T-cell (primary cell): ENCODE measurements at regions of chr10 and their contacts with region 1.

Region 1: GRCh38 chr10:75229971-75230370 is 5.8 kb downstream of the COMTD1 start:
- DNase-seq: no peak
- ATAC-seq: no peak
- H3K4me3 ChIP-seq: no peak overlapping the region
- H3K4me3 Mint-ChIP-seq: no peak overlapping the region
- H3K27ac ChIP-seq: peak overlapping the region; percentile 33
- H3K27ac Mint-ChIP-seq: peak overlapping the region; percentile 7 to 19
- H3K4me1 ChIP-seq: peaks cover 0 to 22% of the 10 kb centered on the region in 2 experiments
- H3K4me1 Mint-ChIP-seq: peaks cover 39 to 57% (median 40%) of the 10 kb centered on the region in 3 donors
- H3K27me3 ChIP-seq: no peaks in the 10 kb centered on the region
- H3K27me3 Mint-ChIP-seq: no peaks in the 10 kb centered on the region

Region 2: GRCh38 chr10:74151056-74151878 is 1078.7 kb before region 1 on chr10 and contains the start of gene ADK:
- CTCF ChIA-PET with region 1: no interaction called
- POLR2A ChIA-PET with region 1: interaction called in 1 of 2 experiments, 10 read pairs
- DNase-seq: peak; percentile 98 to 100 (median 100)
- ATAC-seq: peak; percentile 93 to 98 (median 96)
- H3K4me3 ChIP-seq: peak within 1 kb of the TSS; percentile 91 to 94
- H3K4me3 Mint-ChIP-seq: no peak within 1 kb of the TSS
- H3K27ac ChIP-seq: peak within 1 kb of the TSS; percentile 88
- H3K27ac Mint-ChIP-seq: peak within 1 kb of the TSS in 1 of 2 donors; percentile 82
- H3K4me1 ChIP-seq: peaks cover 13 to 26% of the 10 kb centered on the region in 2 experiments
- H3K4me1 Mint-ChIP-seq: peaks cover 45 to 55% (median 54%) of the 10 kb centered on the region in 3 donors
- H3K27me3 ChIP-seq: no peaks in the 10 kb centered on the region
- H3K27me3 Mint-ChIP-seq: no peaks in the 10 kb centered on the region
- total RNA-seq, gene ADK: 20.7 to 32.8 (median 23.6) TPM

Region 3: GRCh38 chr10:74778436-74779094 is 451.4 kb before region 1 on chr10:
- CTCF ChIA-PET with region 1: no interaction called
- POLR2A ChIA-PET with region 1: no interaction called
- DNase-seq: no peak
- ATAC-seq: no peak
- H3K4me3 ChIP-seq: no peak overlapping the region
- H3K4me3 Mint-ChIP-seq: no peak overlapping the region
- H3K27ac ChIP-seq: no peak overlapping the region
- H3K27ac Mint-ChIP-seq: no peak overlapping the region
- H3K4me1 ChIP-seq: no peaks in the 10 kb centered on the region
- H3K4me1 Mint-ChIP-seq: no peaks in the 10 kb centered on the region
- H3K27me3 ChIP-seq: no peaks in the 10 kb centered on the region
- H3K27me3 Mint-ChIP-seq: no peaks in the 10 kb centered on the region

Region 4: GRCh38 chr10:75143353-75143752 is 86.6 kb before region 1 on chr10:
- CTCF ChIA-PET with region 1: no interaction called
- POLR2A ChIA-PET with region 1: interaction called, 6 to 12 read pairs
- DNase-seq: no peak
- ATAC-seq: no peak
- H3K4me3 ChIP-seq: no peak overlapping the region
- H3K4me3 Mint-ChIP-seq: no peak overlapping the region
- H3K27ac ChIP-seq: no peak overlapping the region
- H3K27ac Mint-ChIP-seq: peak overlapping the region; percentile 63 to 81
- H3K4me1 ChIP-seq: peaks cover 6 to 14% of the 10 kb centered on the region in 2 experiments
- H3K4me1 Mint-ChIP-seq: peaks cover 37 to 55% (median 51%) of the 10 kb centered on the region in 3 donors
- H3K27me3 ChIP-seq: no peaks in the 10 kb centered on the region
- H3K27me3 Mint-ChIP-seq: no peaks in the 10 kb centered on the region

Region 5: GRCh38 chr10:75187961-75188426 is 42.0 kb before region 1 on chr10:
- CTCF ChIA-PET with region 1: interaction called, 20 to 53 read pairs
- POLR2A ChIA-PET with region 1: interaction called in 1 of 2 experiments, 7 read pairs
- DNase-seq: peak; percentile 36 to 88 (median 69)
- ATAC-seq: peak; percentile 93 to 99 (median 95)
- H3K4me3 ChIP-seq: no peak overlapping the region
- H3K4me3 Mint-ChIP-seq: peak overlapping the region in 1 of 3 donors; percentile 13
- H3K27ac ChIP-seq: peak overlapping the region; percentile 61
- H3K27ac Mint-ChIP-seq: peak overlapping the region; percentile 91 to 93
- H3K4me1 ChIP-seq: peaks cover 4 to 10% of the 10 kb centered on the region in 2 experiments
- H3K4me1 Mint-ChIP-seq: peaks cover 6 to 8% (median 6%) of the 10 kb centered on the region in 3 donors
- H3K27me3 ChIP-seq: no peaks in the 10 kb centered on the region
- H3K27me3 Mint-ChIP-seq: no peaks in the 10 kb centered on the region

Region 6: DNA sequence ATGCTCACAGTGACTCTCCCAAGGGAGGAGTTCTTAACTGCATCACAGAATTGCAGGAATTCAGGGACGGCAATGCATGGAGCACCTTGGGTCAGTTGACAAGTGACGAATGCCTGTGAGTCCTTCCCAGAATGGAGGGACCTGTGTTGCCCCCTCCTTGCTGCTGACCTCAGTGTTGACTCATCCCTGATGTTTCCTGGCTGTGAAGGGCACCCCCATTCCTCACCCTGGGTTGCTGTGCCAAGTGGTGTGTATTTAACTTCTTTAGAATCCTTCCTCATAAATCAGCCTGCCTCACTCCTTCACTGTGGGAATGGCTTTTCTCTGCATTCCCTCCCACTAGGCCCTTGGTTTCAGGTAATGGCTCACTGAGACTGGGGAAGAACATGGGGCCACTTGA is 300.4 kb after region 1 on chr10:
- CTCF ChIA-PET with region 1: no interaction called
- POLR2A ChIA-PET with region 1: no interaction called
- DNase-seq: no peak
- ATAC-seq: no peak
- H3K4me3 ChIP-seq: no peak overlapping the region
- H3K4me3 Mint-ChIP-seq: no peak overlapping the region
- H3K27ac ChIP-seq: no peak overlapping the region
- H3K27ac Mint-ChIP-seq: no peak overlapping the region
- H3K4me1 ChIP-seq: no peaks in the 10 kb centered on the region
- H3K4me1 Mint-ChIP-seq: no peaks in the 10 kb centered on the region
- H3K27me3 ChIP-seq: no peaks in the 10 kb centered on the region
- H3K27me3 Mint-ChIP-seq: peaks cover 11 to 14% of the 10 kb centered on the region in 2 donors

Region 7: GRCh38 chr10:75612904-75613684 is 383.1 kb after region 1 on chr10:
- CTCF ChIA-PET with region 1: no interaction called
- POLR2A ChIA-PET with region 1: no interaction called
- DNase-seq: no peak
- ATAC-seq: no peak
- H3K4me3 ChIP-seq: no peak overlapping the region
- H3K4me3 Mint-ChIP-seq: no peak overlapping the region
- H3K27ac ChIP-seq: no peak overlapping the region
- H3K27ac Mint-ChIP-seq: no peak overlapping the region
- H3K4me1 ChIP-seq: no peaks in the 10 kb centered on the region
- H3K4me1 Mint-ChIP-seq: no peaks in the 10 kb centered on the region
- H3K27me3 ChIP-seq: peaks cover 0 to 3% of the 10 kb centered on the region in 2 experiments
- H3K27me3 Mint-ChIP-seq: peaks cover 8 to 22% of the 10 kb centered on the region in 2 donors